ENCODE measurements at regions of chr1 and their contacts with region 1.

Region 1: GRCh38 chr1:165073185-165074007 is 283.1 kb downstream of the LMX1A start:
- DNase-seq: no peak
- H3K4me3 ChIP-seq: no peak overlapping the region
- H3K27ac ChIP-seq: peak overlapping the region in 54 of 59 donors; percentile 9 to 100 (median 96)
- H3K27me3 ChIP-seq: no peaks in the 10 kb centered on the region
- CTCF ChIP-seq: peak; percentile 66 to 94 (median 82)

Region 2: GRCh38 chr1:163406772-163407171 is 1666.6 kb before region 1 on chr1:
- intact Hi-C with region 1: loop called in 1 of 2 experiments (anchors 5 kb)
- DNase-seq: no peak
- H3K4me3 ChIP-seq: no peak overlapping the region
- H3K27ac ChIP-seq: no peak overlapping the region
- H3K27me3 ChIP-seq: no peaks in the 10 kb centered on the region
- CTCF ChIP-seq: no peak

Region 3: GRCh38 chr1:163820766-163821165 is 1252.6 kb before region 1 on chr1:
- intact Hi-C with region 1: loop called in 1 of 2 experiments (anchors 5 kb)
- DNase-seq: no peak
- H3K4me3 ChIP-seq: no peak overlapping the region
- H3K27ac ChIP-seq: no peak overlapping the region
- H3K27me3 ChIP-seq: no peaks in the 10 kb centered on the region
- CTCF ChIP-seq: peak in 46 of 56 donors; percentile 8 to 55 (median 38)

Region 4: DNA sequence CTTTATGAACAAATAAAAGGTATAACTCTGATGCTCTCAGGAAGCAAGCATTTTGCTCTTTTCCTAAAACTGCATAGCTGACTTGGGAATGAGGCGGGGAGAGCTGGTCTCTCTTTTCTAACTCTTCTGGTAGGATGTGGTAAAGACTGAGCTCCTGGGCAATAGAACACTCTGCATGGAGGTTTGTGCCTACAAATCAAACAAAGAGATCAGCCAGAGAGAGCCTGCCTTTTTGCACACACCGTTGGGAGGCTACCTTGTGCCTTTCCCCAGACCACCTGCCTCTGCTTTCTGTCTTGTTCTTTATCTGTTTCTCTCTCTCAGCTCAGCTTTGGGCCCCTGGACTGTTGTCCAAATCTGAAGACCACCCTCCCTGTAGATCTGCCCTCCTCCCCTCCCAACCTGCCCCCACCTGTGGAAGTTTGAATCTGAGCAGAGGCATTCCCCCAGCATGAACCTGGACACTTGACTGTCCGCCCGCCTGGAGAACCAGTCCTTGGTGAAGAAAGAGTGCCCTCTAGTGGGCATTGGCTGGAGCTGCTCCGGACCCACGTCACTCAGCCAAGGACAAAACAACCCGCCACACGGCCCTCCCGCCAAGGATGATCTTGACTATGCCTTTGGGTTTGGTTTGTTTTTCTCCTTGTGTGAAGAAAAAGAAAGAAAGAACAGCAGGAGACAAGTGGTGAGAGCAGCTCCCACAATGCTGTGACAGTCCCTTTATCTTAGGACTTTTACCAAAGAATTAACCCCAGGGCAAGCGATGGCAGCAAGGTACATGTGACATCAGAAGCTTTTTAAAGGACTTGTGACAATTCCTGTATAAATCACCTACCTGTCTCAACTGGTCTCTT is 286.2 kb before region 1 on chr1:
- intact Hi-C with region 1: loop called (anchors 2 to 5 kb)
- DNase-seq: peak; percentile 79 to 92 (median 90)
- H3K4me3 ChIP-seq: peak overlapping the region in 43 of 59 donors; percentile 2 to 56 (median 26)
- H3K27ac ChIP-seq: peak overlapping the region in 47 of 59 donors; percentile 2 to 81 (median 55)
- H3K27me3 ChIP-seq: no peaks in the 10 kb centered on the region
- CTCF ChIP-seq: peak; percentile 56 to 94 (median 90)

Region 5: GRCh38 chr1:164914208-164914607 is 159.2 kb before region 1 on chr1:
- intact Hi-C with region 1: loop called in 1 of 2 experiments (anchors 10 kb)
- DNase-seq: no peak
- H3K4me3 ChIP-seq: no peak overlapping the region
- H3K27ac ChIP-seq: peak overlapping the region in 11 of 59 donors; percentile 4 to 60 (median 34)
- H3K27me3 ChIP-seq: no peaks in the 10 kb centered on the region
- CTCF ChIP-seq: peak in 46 of 56 donors; percentile 9 to 61 (median 42)

Region 6: DNA sequence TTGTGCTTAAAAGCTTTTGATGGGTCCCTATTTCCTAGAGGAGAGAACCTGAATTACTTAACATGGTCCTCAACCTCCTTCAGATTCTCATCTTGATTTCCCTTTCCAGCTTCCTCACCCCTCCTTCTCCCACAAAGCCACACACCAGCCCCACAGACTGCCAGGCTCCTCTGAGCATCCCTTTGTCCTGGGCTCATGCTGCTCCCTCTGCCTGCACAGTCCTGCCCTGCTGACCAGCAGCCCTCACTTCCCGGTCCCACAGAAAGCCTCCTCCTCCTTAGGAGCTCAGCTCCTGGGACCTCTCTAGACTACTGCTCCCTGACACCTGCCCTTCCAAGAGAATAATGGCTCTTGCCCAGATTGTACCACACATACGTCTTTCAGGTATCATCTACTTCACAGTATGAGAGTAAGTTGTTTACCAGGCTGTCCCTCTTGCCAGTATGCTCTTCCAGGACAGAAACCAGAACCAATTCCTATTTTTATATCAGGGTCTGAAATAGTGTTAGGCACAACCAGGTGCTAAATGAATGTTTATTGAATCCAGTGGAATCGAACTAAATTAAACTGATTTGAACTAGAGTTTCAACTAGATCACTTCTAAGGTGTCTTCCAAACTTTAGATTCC is 90.3 kb before region 1 on chr1:
- intact Hi-C with region 1: loop called in 1 of 2 experiments (anchors 5 kb)
- DNase-seq: peak in 8 of 10 donors; percentile 31 to 80 (median 60)
- H3K4me3 ChIP-seq: peak overlapping the region in 1 of 59 donors; percentile 25
- H3K27ac ChIP-seq: peak overlapping the region in 32 of 59 donors; percentile 1 to 70 (median 44)
- H3K27me3 ChIP-seq: no peaks in the 10 kb centered on the region
- CTCF ChIP-seq: peak in 32 of 56 donors; percentile 14 to 65 (median 33)

Region 7: DNA sequence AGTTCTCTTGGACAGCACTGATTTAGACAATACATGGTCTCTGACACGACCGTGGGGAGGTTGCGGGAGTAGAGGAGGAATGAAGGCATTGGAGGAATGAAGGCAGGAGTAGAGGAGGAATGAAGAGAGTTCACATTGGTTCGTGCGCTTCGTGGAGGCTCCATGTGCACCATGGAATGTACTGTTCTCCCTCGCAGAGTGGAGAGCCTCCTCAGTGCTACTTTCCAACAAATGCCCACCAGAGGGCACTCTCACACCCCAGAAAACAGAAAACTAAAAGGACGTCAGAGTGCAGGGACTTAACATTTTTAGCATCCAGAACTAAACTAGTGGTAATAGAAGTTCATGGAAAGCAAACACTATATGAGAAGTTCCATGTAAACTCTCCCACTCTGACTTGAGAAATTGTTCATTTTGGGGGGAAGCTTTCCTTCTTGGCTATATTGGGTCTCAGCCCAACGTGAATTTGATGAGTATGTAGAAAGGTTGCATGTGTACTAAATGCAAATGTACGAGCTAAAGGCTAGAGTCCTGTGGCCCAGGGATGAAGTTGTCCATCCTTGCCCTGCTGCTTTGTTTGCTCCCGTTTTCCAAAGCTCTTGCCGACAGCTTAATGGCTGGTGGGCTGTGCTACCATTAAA is 71.5 kb after region 1 on chr1:
- intact Hi-C with region 1: no loop called
- DNase-seq: peak in 8 of 10 donors; percentile 34 to 63 (median 54)
- H3K4me3 ChIP-seq: no peak overlapping the region
- H3K27ac ChIP-seq: no peak overlapping the region
- H3K27me3 ChIP-seq: peaks cover 0 to 39% (median 8%) of the 10 kb centered on the region in 45 donors
- CTCF ChIP-seq: peak; percentile 50 to 89 (median 81)